Right cardiac atrium (tissue), 5 donors: ENCODE measurements at regions of chr22 and their contacts with region 1.

Region 1: GRCh38 chr22:23219822-23220484 is 39.6 kb downstream of the BCR start:
- DNase-seq: peak in 2 of 3 donors; percentile 42 to 43
- ATAC-seq: peak in 1 of 2 donors; percentile 3
- H3K4me3 ChIP-seq: no peak overlapping the region
- H3K27ac ChIP-seq: no peak overlapping the region
- H3K4me1 ChIP-seq: peaks cover 63% of the 10 kb centered on the region
- H3K27me3 ChIP-seq: no peaks in the 10 kb centered on the region

Region 2: DNA sequence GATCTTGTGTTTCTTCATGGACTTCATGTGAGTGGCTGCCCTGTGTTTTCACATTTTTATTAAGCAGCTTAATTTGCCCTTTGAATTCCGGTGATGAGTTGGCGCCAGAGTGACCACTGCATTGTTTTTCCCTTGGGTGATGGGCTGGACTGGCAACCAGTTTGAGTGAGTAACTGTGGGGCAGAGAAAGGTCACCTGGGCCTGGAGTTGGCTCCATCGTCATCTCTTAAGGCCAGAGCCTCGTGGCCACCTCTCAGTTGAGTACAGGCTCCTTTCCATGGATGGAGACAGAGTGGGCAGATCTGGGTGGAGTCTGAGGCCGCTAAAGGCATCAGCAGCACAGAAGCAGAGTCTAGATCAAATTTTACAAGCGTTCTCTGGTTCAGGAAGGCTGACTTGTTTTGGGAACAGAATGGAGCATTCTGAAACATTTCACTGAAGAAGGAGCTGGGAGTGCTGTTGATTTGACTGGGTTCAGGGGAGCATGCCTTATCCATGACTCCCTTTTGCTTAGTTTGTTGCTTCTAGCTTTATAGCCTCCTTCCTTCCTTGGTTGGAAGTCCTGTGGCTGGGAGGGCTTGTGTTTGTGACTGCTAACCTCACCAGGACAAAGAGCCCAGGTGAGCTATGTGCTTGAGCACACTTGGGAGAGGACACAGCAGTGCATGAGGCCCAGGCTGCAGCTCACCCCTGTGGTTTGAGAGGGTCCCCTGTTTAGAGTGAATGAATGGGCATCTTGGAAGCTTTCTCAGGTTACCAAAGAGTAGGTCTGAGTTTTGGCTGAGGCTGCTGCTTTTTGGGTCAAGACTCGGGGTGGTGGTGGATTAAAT is 31.9 kb before region 1 on chr22:
- intact Hi-C with region 1: loop called in 1 of 4 experiments (anchors 5 kb)
- DNase-seq: peak in 2 of 3 donors; percentile 10 to 38
- ATAC-seq: peak in 1 of 2 donors; percentile 23
- H3K4me3 ChIP-seq: no peak overlapping the region
- H3K27ac ChIP-seq: no peak overlapping the region
- H3K4me1 ChIP-seq: peaks cover 19% of the 10 kb centered on the region
- H3K27me3 ChIP-seq: no peaks in the 10 kb centered on the region

Region 3: GRCh38 chr22:23458663-23459541 is 238.9 kb after region 1 on chr22:
- intact Hi-C with region 1: no loop called
- DNase-seq: no peak
- ATAC-seq: peak in 1 of 2 donors; percentile 32
- H3K4me3 ChIP-seq: no peak overlapping the region
- H3K27ac ChIP-seq: no peak overlapping the region
- H3K4me1 ChIP-seq: no peaks in the 10 kb centered on the region
- H3K27me3 ChIP-seq: no peaks in the 10 kb centered on the region

Region 4: GRCh38 chr22:23521441-23522113 is 301.6 kb after region 1 on chr22:
- intact Hi-C with region 1: no loop called
- DNase-seq: peak; percentile 92 to 97 (median 97)
- ATAC-seq: peak; percentile 89 to 93
- H3K4me3 ChIP-seq: peak overlapping the region; percentile 30
- H3K27ac ChIP-seq: peak overlapping the region; percentile 96
- H3K4me1 ChIP-seq: no peaks in the 10 kb centered on the region
- H3K27me3 ChIP-seq: no peaks in the 10 kb centered on the region